Activated T-helper 2 cell treated with anti-CD3 and anti-CD28 coated beads, Interferon-gamma antibody, Interleukin-2, Interleukin-4, amounts not matched to agents 10 μg/mL and 5 μg/mL and 100 μg/mL, durations not matched to agents 14 hours and 24 hours and 36 hours (primary cell): ENCODE measurements at regions of chr1 and their contacts with region 1.

Region 1: DNA sequence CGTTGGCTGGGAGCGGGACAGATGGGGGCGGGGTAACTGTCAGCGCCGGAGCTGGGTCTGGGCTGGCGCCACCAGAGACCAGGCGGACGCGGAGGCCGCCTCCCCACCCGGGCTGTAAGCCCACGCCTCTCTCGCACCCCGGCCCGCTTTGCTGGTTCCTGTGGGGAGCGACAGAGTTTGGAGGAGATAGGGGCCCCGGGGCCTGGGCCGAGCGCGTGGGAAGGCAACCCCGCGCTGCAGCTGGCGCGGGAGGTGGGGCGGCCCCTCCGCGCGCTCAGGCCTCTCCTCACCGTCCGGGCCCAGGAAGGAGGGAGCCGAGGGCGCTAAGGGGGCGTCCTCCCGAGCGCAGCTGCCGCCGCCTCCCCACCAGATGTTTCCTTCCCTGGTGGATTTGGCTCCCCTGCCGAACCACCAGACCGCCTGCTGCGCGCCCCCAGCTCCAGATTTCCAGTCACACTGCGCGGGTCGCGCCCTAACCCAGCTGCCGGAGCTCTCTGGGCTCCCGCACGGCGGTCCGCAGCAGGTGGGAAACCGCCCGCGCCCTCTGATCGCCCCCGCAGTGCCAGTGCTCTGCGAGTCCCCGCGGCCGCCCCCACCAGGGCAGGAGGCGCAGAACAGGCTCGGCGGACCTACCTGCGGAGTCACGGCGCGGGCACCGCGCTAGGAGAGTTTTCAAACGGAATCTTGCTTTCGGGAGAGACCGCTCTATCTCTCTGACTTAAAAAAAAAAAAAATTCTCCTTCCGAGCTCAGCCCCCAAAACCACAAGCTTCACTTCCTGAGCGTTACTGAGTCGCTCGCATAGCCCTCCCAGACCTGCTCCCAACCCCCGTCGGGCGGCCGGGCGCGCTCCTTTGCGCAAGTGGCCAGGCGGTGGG is 1.1 kb downstream of the GFI1 start:
- DNase-seq: peak; percentile 88
- H3K4me3 Mint-ChIP-seq: peak overlapping the region; percentile 99
- H3K27ac Mint-ChIP-seq: peak overlapping the region; percentile 97
- H3K4me1 Mint-ChIP-seq: peaks cover 26% of the 10 kb centered on the region
- H3K27me3 Mint-ChIP-seq: no peaks in the 10 kb centered on the region

Region 2: GRCh38 chr1:91929250-91929649 is 556.4 kb before region 1 on chr1:
- intact Hi-C with region 1: no loop called
- DNase-seq: no peak
- H3K4me3 Mint-ChIP-seq: no peak overlapping the region
- H3K27ac Mint-ChIP-seq: no peak overlapping the region
- H3K4me1 Mint-ChIP-seq: peaks cover 3% of the 10 kb centered on the region
- H3K27me3 Mint-ChIP-seq: no peaks in the 10 kb centered on the region

Region 3: GRCh38 chr1:92194511-92194910 is 291.1 kb before region 1 on chr1:
- intact Hi-C with region 1: loop called (anchors 10 kb)
- DNase-seq: no peak
- H3K4me3 Mint-ChIP-seq: no peak overlapping the region
- H3K27ac Mint-ChIP-seq: no peak overlapping the region
- H3K4me1 Mint-ChIP-seq: peaks cover 18% of the 10 kb centered on the region
- H3K27me3 Mint-ChIP-seq: no peaks in the 10 kb centered on the region

Region 4: GRCh38 chr1:92317836-92318493 is 167.7 kb before region 1 on chr1:
- intact Hi-C with region 1: loop called (anchors 2 kb)
- DNase-seq: peak; percentile 23
- H3K4me3 Mint-ChIP-seq: peak overlapping the region; percentile 49
- H3K27ac Mint-ChIP-seq: peak overlapping the region; percentile 72
- H3K4me1 Mint-ChIP-seq: peaks cover 55% of the 10 kb centered on the region
- H3K27me3 Mint-ChIP-seq: no peaks in the 10 kb centered on the region

Region 5: DNA sequence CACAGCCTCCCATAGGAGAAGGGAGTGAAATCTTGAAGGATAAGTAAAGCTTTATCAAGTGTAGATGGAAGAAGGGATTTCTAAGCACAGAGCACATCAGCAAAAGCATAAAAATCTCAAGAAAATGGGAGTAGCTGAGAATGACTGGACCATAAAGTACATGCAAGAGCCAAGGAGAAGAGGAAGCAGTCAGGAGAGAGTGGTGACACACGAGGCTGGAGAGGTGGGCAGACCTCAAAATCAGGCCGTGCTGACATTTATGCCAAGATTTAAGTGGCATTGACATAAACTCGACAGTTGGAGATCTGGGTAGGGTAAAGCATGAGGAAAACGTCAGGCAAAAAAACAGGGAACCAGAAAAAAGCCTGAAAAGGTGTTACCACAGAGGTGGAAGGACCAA is 61.2 kb before region 1 on chr1:
- intact Hi-C with region 1: no loop called
- DNase-seq: no peak
- H3K4me3 Mint-ChIP-seq: no peak overlapping the region
- H3K27ac Mint-ChIP-seq: no peak overlapping the region
- H3K4me1 Mint-ChIP-seq: peaks cover 6% of the 10 kb centered on the region
- H3K27me3 Mint-ChIP-seq: no peaks in the 10 kb centered on the region

Region 6: GRCh38 chr1:92502247-92502646 is 16.6 kb after region 1 on chr1:
- intact Hi-C with region 1: loop called (anchors 2 kb)
- DNase-seq: no peak
- H3K4me3 Mint-ChIP-seq: no peak overlapping the region
- H3K27ac Mint-ChIP-seq: peak overlapping the region; percentile 14
- H3K4me1 Mint-ChIP-seq: peaks cover 46% of the 10 kb centered on the region
- H3K27me3 Mint-ChIP-seq: no peaks in the 10 kb centered on the region

Region 7: DNA sequence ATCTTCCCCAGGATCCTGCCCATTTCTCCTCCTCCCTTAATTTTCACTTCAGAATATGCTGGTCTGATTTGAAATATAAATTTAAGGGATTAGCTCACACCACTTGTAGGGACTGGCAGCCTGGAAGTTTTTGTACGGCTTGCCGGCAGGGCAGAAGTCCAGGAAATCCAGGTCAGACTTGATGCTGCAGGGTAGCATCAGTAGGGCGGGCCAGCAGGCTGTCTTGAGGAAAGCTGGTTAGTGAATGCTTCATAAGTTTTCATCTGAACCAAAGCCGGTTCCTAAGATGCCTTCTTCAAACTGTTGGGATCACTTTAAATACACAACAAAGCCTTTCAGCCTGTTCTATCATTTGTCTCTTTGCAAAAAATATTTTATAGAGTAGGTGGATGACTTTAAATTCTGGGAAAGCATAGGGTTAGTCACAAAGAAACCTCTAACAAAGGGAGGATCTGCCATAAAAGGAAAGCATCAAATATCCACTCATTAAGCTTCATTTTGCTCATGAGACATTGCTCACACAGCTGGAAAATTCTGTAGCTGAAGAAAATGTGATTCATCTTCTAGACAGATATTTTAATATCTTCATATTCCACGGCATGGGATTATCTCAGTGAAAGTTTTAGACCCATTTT is 91.8 kb after region 1 on chr1:
- intact Hi-C with region 1: loop called (anchors 1 kb)
- DNase-seq: no peak
- H3K4me3 Mint-ChIP-seq: peak overlapping the region; percentile 93
- H3K27ac Mint-ChIP-seq: peak overlapping the region; percentile 97
- H3K4me1 Mint-ChIP-seq: peaks cover 66% of the 10 kb centered on the region
- H3K27me3 Mint-ChIP-seq: no peaks in the 10 kb centered on the region

Region 8: GRCh38 chr1:92583821-92584760 is 98.5 kb after region 1 on chr1:
- intact Hi-C with region 1: loop called (anchors 1 kb)
- DNase-seq: no peak
- H3K4me3 Mint-ChIP-seq: peak overlapping the region; percentile 55
- H3K27ac Mint-ChIP-seq: peak overlapping the region; percentile 88
- H3K4me1 Mint-ChIP-seq: peaks cover 60% of the 10 kb centered on the region
- H3K27me3 Mint-ChIP-seq: no peaks in the 10 kb centered on the region